ENCODE measurements at regions of chr22 and their contacts with region 1.

Region 1: DNA sequence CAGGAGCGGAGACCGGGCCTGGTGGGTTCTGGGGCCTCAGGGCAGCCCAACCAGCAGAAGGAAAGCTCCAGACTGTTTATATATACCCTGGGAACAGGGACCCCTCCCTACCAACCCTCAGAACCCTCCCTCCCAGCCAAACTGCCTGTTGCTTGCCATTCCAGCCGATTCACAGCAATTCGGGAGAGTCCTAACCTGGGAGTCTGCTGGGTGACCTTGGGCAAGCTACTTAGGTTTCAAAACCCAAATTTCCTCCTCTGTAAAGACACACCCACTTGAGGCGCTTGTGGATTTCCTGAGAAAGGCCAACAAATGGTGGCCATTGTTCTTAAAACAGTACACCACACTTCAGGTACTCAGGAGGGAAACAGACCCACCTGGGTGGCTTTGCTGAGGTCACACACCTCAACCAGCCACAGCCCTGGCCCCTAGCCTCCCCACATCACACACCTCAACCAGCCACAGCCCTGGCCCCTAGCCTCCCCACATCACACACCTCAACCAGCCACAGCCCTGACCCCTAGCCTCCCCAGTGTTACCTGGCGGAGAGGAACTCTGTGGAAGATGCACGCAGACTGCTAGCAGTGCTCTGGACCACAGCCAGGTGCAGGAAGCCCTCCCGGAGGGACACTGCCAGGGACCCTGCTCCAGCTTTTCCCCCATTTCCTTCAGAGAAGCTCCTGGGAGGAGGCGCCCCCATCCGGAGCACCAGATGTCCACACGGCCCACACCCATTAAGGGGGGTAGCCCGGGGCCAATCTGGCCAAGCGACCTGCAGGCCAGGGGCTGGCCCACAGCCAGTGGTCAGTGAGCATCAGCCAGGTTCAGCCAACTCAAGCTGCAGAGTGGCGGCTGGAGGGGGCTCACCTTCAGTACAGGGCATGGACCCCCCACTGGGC is 6.2 kb downstream of the SHISA8 start:
- DNase-seq: peak; percentile 61
- ATAC-seq: peak; percentile 23
- H3K4me3 Mint-ChIP-seq: peak overlapping the region; percentile 22
- H3K27ac Mint-ChIP-seq: peak overlapping the region; percentile 46
- H3K4me1 Mint-ChIP-seq: peaks cover 28% of the 10 kb centered on the region
- H3K27me3 Mint-ChIP-seq: peaks cover 31% of the 10 kb centered on the region

Region 2: GRCh38 chr22:41891407-41891806 is 17.3 kb before region 1 on chr22:
- CTCF ChIA-PET with region 1: no interaction called
- POLR2A ChIA-PET with region 1: no interaction called
- DNase-seq: no peak
- ATAC-seq: no peak
- H3K4me3 Mint-ChIP-seq: no peak overlapping the region
- H3K27ac Mint-ChIP-seq: no peak overlapping the region
- H3K4me1 Mint-ChIP-seq: no peaks in the 10 kb centered on the region
- H3K27me3 Mint-ChIP-seq: no peaks in the 10 kb centered on the region

Region 3: DNA sequence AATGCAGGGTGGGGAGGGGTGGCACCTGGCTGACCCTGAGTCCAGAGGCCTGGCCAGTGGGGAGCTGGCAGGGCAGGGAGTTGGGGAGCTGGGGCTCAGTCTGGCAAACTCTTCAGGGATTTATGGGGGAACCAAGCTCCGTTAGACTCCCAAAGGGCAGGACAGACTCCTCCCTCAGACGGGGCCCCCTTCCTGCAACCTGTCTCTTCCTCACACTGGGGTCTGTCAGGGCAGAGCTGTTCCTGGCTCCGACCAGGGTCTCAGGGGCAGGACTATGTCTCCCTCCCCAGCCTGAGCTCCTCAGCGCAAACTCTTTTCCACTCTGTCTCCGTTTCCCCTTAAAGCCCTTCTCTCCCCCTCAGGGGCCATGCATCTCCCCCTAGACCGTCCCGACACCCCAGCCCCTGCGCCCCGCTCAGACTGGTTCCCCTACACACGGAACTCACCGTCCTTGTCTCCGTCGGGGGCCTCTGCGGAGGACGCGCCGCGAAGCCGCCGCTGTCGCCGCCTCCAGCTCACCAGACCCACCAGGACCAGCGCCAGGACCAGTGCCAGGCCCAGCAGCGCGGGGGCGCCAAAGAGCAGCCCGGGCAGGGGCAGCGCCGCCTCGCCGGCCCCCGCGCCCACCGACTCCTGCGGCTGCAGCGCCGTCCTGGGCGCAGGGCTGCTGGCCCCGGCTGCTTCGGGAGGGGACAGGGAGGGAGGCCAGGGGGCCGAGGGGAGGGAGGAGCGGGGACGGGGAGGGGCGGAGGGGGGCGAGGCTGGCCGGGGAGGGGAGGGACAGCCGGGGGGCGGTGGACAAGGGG is 17.2 kb after region 1 on chr22:
- CTCF ChIA-PET with region 1: interaction called, 13 read pairs
- POLR2A ChIA-PET with region 1: interaction called, 5 read pairs
- DNase-seq: peak; percentile 78
- ATAC-seq: peak; percentile 88
- H3K4me3 Mint-ChIP-seq: peak overlapping the region; percentile 54
- H3K27ac Mint-ChIP-seq: no peak overlapping the region
- H3K4me1 Mint-ChIP-seq: peaks cover 8% of the 10 kb centered on the region
- H3K27me3 Mint-ChIP-seq: peaks cover 10% of the 10 kb centered on the region

Measured in activated CD8-positive, alpha-beta T cell treated with anti-CD3 and anti-CD28 coated beads, Interleukin-2, amount 10 ng/mL, durations not matched to agents 7 days and 5 days (primary cell).